Sciatic nerve (tissue), 2 donors: ENCODE measurements at regions of chr22 and their contacts with region 1.

Region 1: GRCh38 chr22:44759476-44760310 is 7.3 kb downstream of the ARHGAP8 start:
- DNase-seq: no peak
- ATAC-seq: no peak

Region 2: DNA sequence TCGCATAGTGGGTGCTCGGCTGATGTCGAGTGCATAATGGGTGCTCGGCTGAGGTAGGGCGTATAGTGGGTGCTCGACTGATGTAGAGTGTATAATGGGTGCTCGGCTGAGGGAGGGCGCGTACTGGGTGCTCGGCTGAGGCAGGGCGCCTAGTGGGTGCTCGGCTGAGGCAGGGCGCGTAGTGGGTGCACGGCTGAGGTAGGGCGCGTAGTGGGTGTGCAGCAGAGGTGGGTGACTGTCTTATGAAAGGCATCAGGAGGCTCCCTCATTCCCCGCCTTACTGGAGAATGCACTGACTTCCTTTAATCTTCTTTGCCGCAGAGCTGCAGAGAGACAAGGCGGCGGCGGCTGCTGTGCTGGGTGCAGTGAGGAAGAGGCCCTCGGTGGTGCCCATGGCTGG is 26.4 kb after region 1 on chr22:
- intact Hi-C with region 1: loop called (anchors 1 kb)
- DNase-seq: no peak
- ATAC-seq: no peak